ENCODE measurements at regions of chr10 and their contacts with region 1.

Region 1: GRCh38 chr10:98425511-98426352 is 10.8 kb upstream of the PYROXD2 start:
- DNase-seq: peak; percentile 61
- H3K4me3 Mint-ChIP-seq: no peak overlapping the region
- H3K27ac Mint-ChIP-seq: no peak overlapping the region
- H3K4me1 Mint-ChIP-seq: no peaks in the 10 kb centered on the region
- H3K27me3 Mint-ChIP-seq: no peaks in the 10 kb centered on the region

Region 2: GRCh38 chr10:98414932-98415730 is 10.6 kb before region 1 on chr10 and contains the start of gene PYROXD2:
- CTCF ChIA-PET with region 1: interaction called, 18 read pairs
- DNase-seq: peak; percentile 76
- H3K4me3 Mint-ChIP-seq: peak within 1 kb of the TSS; percentile 94
- H3K27ac Mint-ChIP-seq: peak within 1 kb of the TSS; percentile 94
- H3K4me1 Mint-ChIP-seq: peaks cover 19% of the 10 kb centered on the region
- H3K27me3 Mint-ChIP-seq: no peaks in the 10 kb centered on the region

Region 3: GRCh38 chr10:98673171-98673782 is 247.5 kb after region 1 on chr10:
- CTCF ChIA-PET with region 1: no interaction called
- DNase-seq: no peak
- H3K4me3 Mint-ChIP-seq: no peak overlapping the region
- H3K27ac Mint-ChIP-seq: no peak overlapping the region
- H3K4me1 Mint-ChIP-seq: no peaks in the 10 kb centered on the region
- H3K27me3 Mint-ChIP-seq: peaks cover 12% of the 10 kb centered on the region

Measured in activated naive CD4-positive, alpha-beta T cell treated with anti-CD3 and anti-CD28 coated beads, Interleukin-2, amount 10 ng/mL, durations not matched to agents 7 days and 5 days (primary cell).